SK-N-SH (cell line): ENCODE measurements at regions of chr2 and their contacts with region 1.

Region 1: DNA sequence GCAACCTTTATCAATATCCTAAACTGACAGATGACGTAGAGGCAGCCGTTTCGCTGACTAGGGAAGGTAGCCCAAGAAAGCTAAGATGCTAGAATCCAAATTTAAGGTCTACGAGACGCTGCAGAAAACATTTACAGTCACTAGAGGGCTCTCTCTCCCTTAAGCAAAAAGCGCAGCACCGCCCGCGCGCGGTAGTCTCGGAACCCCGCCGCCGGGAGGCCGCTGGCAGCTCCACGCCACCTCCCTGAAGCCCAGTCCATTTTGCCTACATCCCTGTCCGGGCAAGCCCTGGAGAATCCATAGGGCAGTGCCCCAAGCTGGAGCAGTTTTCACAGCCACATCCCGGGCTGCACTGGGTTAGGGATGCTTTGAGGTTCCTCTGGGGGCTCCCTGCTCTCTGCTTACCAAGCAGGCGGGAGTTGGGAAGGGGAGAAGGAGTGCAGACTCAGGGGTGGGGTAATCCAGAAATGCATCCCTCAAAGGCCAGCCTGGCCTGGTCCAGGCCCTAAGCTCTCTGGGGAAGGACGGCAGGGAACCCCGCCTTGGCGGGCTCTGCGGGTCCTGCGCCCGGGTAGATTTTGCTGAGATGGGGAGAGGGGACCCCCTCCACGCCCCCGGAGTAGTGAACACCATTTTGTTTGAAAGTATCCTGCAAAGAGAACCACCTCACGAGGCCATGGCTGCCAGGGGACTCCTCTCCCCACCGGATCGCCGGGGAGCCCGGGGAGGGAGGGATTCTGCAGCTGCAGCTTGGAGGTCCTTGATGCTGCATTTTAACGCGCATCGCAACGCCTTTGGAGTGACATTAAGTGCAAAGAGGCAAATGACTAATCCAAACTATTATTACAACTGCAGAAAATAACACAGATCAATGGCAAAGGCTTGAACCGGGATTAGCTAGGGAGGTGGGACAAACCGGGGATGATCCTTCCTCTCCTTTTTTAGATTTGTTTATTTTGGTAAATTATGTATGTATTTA is 1.3 kb upstream of the DPYSL5 start:
- DNase-seq: peak; percentile 86
- H3K4me3 ChIP-seq: peak overlapping the region; percentile 18 to 61; a peak in 2 of 4 replicates
- H3K27ac ChIP-seq: no peak overlapping the region
- H3K4me1 ChIP-seq: peaks cover 0 to 30% of the 10 kb centered on the region in 2 experiments; a peak in 2 of 4 replicates
- H3K27me3 ChIP-seq: peaks cover 79% of the 10 kb centered on the region
- CTCF ChIP-seq: peak; percentile 91
- EP300 ChIP-seq: no peak
- RAD21 ChIP-seq: peak; percentile 98

Region 2: DNA sequence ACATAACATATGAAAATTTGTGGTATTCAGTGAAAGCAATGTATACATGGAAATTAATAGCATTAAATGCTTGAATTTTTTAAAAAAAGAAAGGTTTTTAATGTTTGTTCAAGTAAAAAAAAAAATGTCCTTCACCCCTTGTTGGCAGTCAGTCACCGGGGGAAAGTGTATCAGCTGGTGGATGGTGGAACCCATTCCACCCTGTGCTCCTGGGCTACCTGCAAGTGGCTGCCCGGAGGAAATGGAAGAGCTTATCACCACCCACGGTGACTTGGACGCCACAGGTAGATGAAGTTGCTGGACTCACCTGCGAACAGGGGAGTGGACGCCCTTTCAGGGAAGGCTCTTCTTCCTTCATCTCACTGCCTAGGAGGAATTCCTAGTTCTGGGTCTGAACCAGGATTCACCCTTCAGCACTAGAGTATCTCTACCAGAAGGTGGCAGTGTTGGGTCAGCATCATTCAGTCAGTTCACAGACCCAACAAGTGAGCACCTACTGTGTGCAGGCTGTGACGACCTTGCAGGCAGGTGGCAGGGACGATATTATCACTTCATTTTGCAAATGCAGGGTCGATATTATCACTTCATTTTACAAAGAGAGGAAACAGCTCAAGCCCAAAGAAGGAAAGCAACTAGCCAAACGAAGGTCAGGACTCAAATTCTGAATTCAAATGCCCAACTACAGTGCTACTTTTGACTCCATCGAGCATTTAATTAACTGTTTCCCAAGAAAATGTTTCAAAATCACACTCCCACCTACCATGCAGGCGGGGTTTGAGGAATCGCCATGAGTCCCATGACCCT is 241.2 kb before region 1 on chr2:
- CTCF ChIA-PET with region 1: interaction called, 15 read pairs
- POLR2A ChIA-PET with region 1: no interaction called
- DNase-seq: peak; percentile 78
- H3K4me3 ChIP-seq: no peak overlapping the region; a peak in 1 of 4 replicates
- H3K27ac ChIP-seq: no peak overlapping the region
- H3K4me1 ChIP-seq: no peaks in the 10 kb centered on the region; a peak in 1 of 4 replicates
- H3K27me3 ChIP-seq: peaks cover 21% of the 10 kb centered on the region
- CTCF ChIP-seq: peak; percentile 94
- EP300 ChIP-seq: no peak
- RAD21 ChIP-seq: peak; percentile 99

Region 3: DNA sequence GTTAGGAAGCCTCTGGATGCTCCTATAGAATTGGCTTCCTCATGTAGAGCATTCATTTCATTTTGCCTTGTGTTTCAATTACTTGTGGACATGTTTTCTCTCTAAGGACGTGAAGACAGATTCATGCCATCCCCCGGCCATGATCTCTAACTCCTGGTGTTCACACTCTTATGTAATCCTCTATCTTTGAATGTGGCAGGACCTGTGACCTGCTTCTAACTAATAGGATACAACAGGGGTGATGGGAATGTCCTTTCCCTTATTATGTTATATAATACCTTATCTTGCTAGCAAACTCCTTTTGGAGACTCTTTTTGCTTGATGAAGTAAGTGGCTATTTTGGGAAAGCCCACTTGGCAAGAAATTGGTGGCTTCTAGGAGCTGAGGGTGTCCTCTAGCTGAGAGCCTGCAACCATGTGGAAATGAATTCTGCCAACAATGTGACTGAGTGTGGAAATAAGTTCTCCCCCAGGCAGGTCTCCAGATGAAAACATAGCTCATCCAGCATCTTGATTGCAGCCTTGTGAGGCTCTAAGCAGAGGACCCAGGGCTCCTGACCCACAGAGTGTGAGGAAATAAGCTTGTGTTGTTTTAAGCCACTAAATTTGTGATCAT is 15.1 kb after region 1 on chr2:
- CTCF ChIA-PET with region 1: interaction called, 71 read pairs
- POLR2A ChIA-PET with region 1: interaction called, 7 read pairs
- DNase-seq: no peak
- H3K4me3 ChIP-seq: no peak overlapping the region
- H3K27ac ChIP-seq: no peak overlapping the region
- H3K4me1 ChIP-seq: peaks cover 0 to 37% of the 10 kb centered on the region in 2 experiments; a peak in 2 of 4 replicates
- H3K27me3 ChIP-seq: peaks cover 28% of the 10 kb centered on the region
- CTCF ChIP-seq: no peak
- EP300 ChIP-seq: no peak
- RAD21 ChIP-seq: no peak

Region 4: GRCh38 chr2:26922405-26923188 is 76.0 kb after region 1 on chr2:
- CTCF ChIA-PET with region 1: interaction called, 779 read pairs
- POLR2A ChIA-PET with region 1: interaction called, 51 read pairs
- DNase-seq: peak; percentile 89
- H3K4me3 ChIP-seq: no peak overlapping the region
- H3K27ac ChIP-seq: peak overlapping the region in 1 of 2 experiments; percentile 22; a peak in 1 of 4 replicates
- H3K4me1 ChIP-seq: peaks cover 0 to 16% of the 10 kb centered on the region in 2 experiments; a peak in 2 of 4 replicates
- H3K27me3 ChIP-seq: peaks cover 9% of the 10 kb centered on the region; the same call in 1 of the 2 replicates
- CTCF ChIP-seq: peak; percentile 57
- EP300 ChIP-seq: no peak
- RAD21 ChIP-seq: peak; percentile 88

Region 5: GRCh38 chr2:26970244-26970920 is 123.8 kb after region 1 on chr2 and contains the start of gene MAPRE3:
- CTCF ChIA-PET with region 1: interaction called, 37 read pairs
- POLR2A ChIA-PET with region 1: no interaction called
- DNase-seq: peak; percentile 100
- H3K4me3 ChIP-seq: peak within 1 kb of the TSS; percentile 65 to 78
- H3K27ac ChIP-seq: peak within 1 kb of the TSS in 1 of 2 experiments; percentile 7; a peak in 1 of 4 replicates
- H3K4me1 ChIP-seq: peaks cover 0 to 13% of the 10 kb centered on the region in 2 experiments; a peak in 2 of 4 replicates
- H3K27me3 ChIP-seq: peaks cover 7% of the 10 kb centered on the region; the same call in 1 of the 2 replicates
- CTCF ChIP-seq: no peak
- EP300 ChIP-seq: no peak
- RAD21 ChIP-seq: no peak
- polyA plus RNA-seq, gene MAPRE3: 20.2 and 24.4 TPM in 2 replicates

Region 6: DNA sequence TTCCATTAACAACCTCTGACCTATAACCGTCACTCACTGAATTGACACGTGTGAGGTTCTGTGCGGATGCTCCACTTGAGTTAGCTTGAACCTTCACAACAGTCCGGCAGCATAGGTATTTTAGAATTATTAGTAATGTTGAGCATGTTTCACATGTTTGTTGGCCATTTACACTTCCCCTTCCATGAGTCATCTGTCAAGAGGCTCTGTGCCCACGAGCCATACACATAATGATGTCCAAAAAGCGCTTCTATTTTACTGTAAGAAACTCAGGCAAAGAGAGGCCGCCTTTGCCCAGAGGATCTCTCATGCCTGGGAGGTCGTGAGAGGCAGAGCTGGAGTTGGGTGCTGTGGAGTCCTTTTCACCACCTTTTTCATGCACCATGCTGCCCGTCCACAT is 157.2 kb after region 1 on chr2:
- CTCF ChIA-PET with region 1: interaction called, 13 read pairs
- POLR2A ChIA-PET with region 1: no interaction called
- DNase-seq: no peak
- H3K4me3 ChIP-seq: no peak overlapping the region
- H3K27ac ChIP-seq: no peak overlapping the region
- H3K4me1 ChIP-seq: 0 out of 4 replicates have a peak, but pooled peaks cover 0 to 7% of the 10 kb centered on the region in 2 experiments
- H3K27me3 ChIP-seq: no peaks in the 10 kb centered on the region
- CTCF ChIP-seq: no peak
- EP300 ChIP-seq: no peak
- RAD21 ChIP-seq: no peak

Region 7: GRCh38 chr2:27050281-27050995 is 203.8 kb after region 1 on chr2:
- CTCF ChIA-PET with region 1: interaction called, 11 read pairs
- POLR2A ChIA-PET with region 1: interaction called, 6 read pairs
- DNase-seq: peak; percentile 93
- H3K4me3 ChIP-seq: peak overlapping the region; percentile 86 to 89
- H3K27ac ChIP-seq: peak overlapping the region; percentile 81 to 98
- H3K4me1 ChIP-seq: peaks cover 10 to 15% of the 10 kb centered on the region in 2 experiments; a peak in 2 of 4 replicates
- H3K27me3 ChIP-seq: no peaks in the 10 kb centered on the region
- CTCF ChIP-seq: peak; percentile 47
- EP300 ChIP-seq: peak in 1 of 2 experiments; percentile 76; a peak in 2 of 4 replicates
- RAD21 ChIP-seq: no peak; the same call in 1 of the 2 replicates

Region 8: GRCh38 chr2:27211829-27212627 is 365.4 kb after region 1 on chr2 and contains the starts of genes ATRAID and SLC5A6:
- CTCF ChIA-PET with region 1: no interaction called
- POLR2A ChIA-PET with region 1: no interaction called
- DNase-seq: peak; percentile 99
- H3K4me3 ChIP-seq: peak within 1 kb of the TSS; percentile 84 to 86
- H3K27ac ChIP-seq: peak within 1 kb of the TSS; percentile 89 to 99
- H3K4me1 ChIP-seq: peaks cover 5 to 26% of the 10 kb centered on the region in 2 experiments; a peak in 3 of 4 replicates
- H3K27me3 ChIP-seq: no peaks in the 10 kb centered on the region
- CTCF ChIP-seq: no peak
- EP300 ChIP-seq: no peak
- RAD21 ChIP-seq: no peak
- polyA plus RNA-seq, gene ATRAID: 289 and 366 TPM in 2 replicates
- polyA plus RNA-seq, gene SLC5A6: 75.7 and 85.0 TPM in 2 replicates